IMR-90 (cell line): ENCODE measurements at regions of chr11 and their contacts with region 1.

Region 1: DNA sequence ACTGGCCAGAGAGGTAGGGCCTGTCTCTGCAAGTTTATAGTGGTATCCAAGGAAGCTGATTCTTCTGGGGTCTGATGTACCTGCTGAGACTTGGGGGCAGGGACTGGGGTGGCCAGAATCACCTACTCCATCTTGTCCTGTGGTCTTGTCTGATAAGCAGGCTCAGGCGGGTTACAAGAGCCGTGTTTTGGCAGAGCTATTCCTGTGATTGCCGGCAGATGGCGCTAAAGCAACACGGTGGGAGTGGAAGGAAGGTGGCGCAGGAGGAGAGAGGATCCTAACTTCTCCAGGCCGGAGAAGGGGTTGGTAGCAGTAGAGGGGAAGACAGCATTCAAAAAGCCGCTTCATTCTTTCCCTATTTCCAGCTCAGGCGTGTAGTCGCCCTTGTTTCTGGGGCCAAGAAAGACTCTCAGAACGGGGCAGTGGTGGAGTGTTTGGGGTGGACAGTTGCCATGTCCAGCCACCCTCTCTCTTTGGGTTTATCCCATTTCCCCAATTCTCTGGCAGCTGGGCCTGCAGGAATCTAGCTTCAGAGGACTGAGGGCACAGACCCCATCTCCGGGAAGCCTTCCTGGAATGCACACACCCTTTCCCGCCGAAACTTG is 15.1 kb downstream of the CHRM1 start:
- DNase-seq: peak; percentile 79
- ATAC-seq: peak; percentile 86
- H3K4me3 ChIP-seq: no peak overlapping the region
- H3K27ac ChIP-seq: no peak overlapping the region
- H3K4me1 ChIP-seq: peaks cover 3% of the 10 kb centered on the region; the same call in 1 of the 2 replicates
- H3K27me3 ChIP-seq: peaks cover 7% of the 10 kb centered on the region; the same call in 1 of the 2 replicates
- CTCF ChIP-seq: peak; percentile 99
- POLR2A ChIP-seq: no peak; the same call in 1 of the 2 replicates
- RAD21 ChIP-seq: peak; percentile 98

Region 2: GRCh38 chr11:63023841-63024648 is 118.0 kb after region 1 on chr11:
- CTCF ChIA-PET with region 1: interaction called, 59 read pairs
- POLR2A ChIA-PET with region 1: no interaction called
- dilution Hi-C with region 1: no loop called
- in situ Hi-C with region 1: loop called (anchors 5 kb)
- intact Hi-C with region 1: loop called (anchors 1 kb)
- DNase-seq: peak; percentile 61
- ATAC-seq: peak; percentile 100
- H3K4me3 ChIP-seq: no peak overlapping the region
- H3K27ac ChIP-seq: no peak overlapping the region
- H3K4me1 ChIP-seq: no peaks in the 10 kb centered on the region
- H3K27me3 ChIP-seq: peaks cover 10% of the 10 kb centered on the region; the same call in 1 of the 2 replicates
- CTCF ChIP-seq: peak; percentile 98
- POLR2A ChIP-seq: no peak
- RAD21 ChIP-seq: peak; percentile 91

Region 3: DNA sequence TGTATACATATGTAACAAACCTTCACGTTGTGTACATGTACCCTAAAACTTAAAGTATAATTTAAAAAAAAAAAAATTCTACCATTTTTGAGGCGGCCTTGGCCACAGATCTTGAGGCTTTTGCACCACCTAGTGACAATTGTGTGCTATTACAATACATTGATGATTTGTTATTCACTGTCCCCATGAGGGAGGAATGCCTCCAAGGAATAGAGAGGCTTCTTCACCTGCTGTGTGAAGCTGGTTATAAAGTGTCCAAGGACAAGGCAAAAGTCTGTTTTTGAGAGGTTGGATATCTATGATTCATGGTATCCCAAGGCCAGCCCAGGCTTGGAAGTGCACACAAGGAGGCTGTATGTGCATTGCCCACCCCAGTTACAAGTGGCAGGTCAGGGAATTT is 306.7 kb after region 1 on chr11:
- CTCF ChIA-PET with region 1: no interaction called
- POLR2A ChIA-PET with region 1: no interaction called
- dilution Hi-C with region 1: no loop called
- in situ Hi-C with region 1: loop called (anchors 10 kb)
- intact Hi-C with region 1: no loop called
- DNase-seq: no peak
- ATAC-seq: peak; percentile 77
- H3K4me3 ChIP-seq: no peak overlapping the region
- H3K27ac ChIP-seq: no peak overlapping the region
- H3K4me1 ChIP-seq: no peaks in the 10 kb centered on the region
- H3K27me3 ChIP-seq: 0 out of 2 replicates have a peak, but pooled peaks cover 1% of the 10 kb centered on the region
- CTCF ChIP-seq: peak; percentile 57
- POLR2A ChIP-seq: no peak
- RAD21 ChIP-seq: peak; percentile 55